ENCODE measurements at regions of chr15 and their contacts with region 1.

Region 1: DNA sequence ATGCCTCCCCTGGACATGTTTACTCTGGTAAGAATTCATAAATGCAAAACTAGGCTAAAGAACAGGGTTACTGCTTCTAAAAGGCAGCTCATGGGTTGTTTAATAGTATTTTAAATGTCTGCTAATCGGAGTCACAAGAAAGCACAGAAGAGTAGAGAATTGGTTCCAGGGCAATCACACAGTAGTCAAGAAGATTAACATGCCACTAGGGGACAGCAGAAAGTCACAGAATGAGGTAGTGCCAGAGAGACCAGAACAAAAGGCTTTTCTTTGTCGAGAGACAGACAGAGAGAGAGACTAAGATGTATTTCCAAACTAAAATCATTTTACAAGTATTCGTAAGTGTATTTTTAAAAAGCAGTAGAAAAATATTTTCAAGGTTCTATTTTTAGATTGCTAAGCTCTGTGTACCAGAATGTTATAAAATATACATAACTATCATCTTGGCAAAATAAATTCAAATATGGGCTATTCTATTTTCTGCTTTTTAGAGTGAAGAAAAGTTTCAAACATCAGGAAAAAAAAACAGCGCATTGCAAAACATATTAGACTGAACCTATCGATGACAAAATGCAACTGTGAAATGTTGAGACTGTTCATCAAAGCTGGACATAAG is 78.3 kb upstream of the CDIN1 start:
- DNase-seq: peak; percentile 34
- H3K4me3 Mint-ChIP-seq: no peak overlapping the region
- H3K27ac Mint-ChIP-seq: no peak overlapping the region
- H3K4me1 Mint-ChIP-seq: no peaks in the 10 kb centered on the region
- H3K27me3 Mint-ChIP-seq: peaks cover 9% of the 10 kb centered on the region

Region 2: DNA sequence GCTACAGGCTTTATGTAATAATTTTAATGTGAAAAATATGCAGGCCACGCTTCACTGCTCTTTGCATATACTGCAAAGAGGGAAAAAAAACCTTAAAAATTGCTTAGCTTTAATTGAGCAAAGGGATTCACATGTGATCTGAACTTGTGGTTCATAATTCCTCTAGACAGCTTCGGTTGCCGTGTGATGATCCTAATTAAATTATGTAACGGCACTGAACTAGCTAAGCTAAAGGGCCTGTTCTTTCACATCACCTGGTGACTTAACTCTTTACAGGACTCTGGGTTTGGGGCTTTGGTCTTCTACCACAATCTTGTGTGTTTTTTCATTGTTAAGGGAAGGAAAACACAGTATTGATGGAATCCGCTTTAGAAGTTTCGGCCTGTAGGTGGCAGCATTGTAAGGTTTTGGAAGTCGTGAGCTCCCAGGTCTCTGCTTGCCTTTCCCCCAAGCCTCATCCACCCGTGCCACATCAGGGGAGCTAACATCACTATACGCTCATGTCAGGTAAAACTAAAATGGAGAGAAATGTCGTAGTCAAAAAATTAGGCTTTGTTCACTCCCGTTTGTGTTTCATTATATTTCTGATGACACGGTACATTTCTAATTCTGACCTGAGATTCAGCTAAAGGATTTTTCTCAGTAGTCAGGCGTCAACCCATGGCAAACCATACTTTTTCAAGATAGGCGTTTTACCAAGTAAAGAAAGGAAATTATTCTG is 749.6 kb before region 1 on chr15:
- CTCF ChIA-PET with region 1: interaction called, 3 read pairs
- intact Hi-C with region 1: loop called (anchors 2 kb)
- DNase-seq: peak; percentile 73
- H3K4me3 Mint-ChIP-seq: no peak overlapping the region
- H3K27ac Mint-ChIP-seq: no peak overlapping the region
- H3K4me1 Mint-ChIP-seq: no peaks in the 10 kb centered on the region
- H3K27me3 Mint-ChIP-seq: peaks cover 9% of the 10 kb centered on the region

Region 3: DNA sequence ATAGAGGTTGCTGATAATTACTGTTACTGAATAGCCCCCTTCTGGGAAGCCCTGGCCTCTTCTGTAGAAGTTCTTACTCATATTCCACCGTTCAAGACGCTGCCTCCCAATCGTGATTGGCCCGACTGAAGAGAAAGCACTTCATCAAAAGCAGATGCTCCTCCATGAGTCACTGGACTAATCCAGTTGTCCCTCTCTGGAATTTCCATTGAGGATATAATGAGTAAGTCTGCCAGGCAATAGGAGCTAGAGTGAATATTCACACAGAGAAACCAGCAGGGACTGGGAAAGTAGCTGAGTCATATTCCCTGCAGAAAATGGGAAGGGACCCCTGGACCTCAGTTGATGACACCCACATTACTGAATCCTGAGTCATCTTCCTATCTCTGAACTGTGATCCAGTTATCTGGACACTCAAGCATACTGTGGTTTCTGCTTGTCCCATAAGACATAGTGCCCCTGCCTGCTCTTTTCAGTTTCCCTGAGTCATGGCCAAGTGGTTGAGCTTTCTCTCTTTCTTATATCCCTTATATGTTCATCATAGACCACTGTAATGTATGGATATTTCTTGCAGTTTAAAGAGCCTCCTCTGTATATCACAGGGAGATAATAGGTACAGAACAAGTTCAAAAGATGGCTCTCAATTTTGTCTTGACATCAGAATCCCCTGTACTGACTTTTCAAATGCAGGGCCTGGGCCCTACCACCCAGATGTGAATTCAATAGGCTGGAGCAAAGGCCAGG is 72.9 kb before region 1 on chr15:
- CTCF ChIA-PET with region 1: no interaction called
- intact Hi-C with region 1: no loop called
- DNase-seq: no peak
- H3K4me3 Mint-ChIP-seq: no peak overlapping the region
- H3K27ac Mint-ChIP-seq: no peak overlapping the region
- H3K4me1 Mint-ChIP-seq: no peaks in the 10 kb centered on the region
- H3K27me3 Mint-ChIP-seq: peaks cover 3% of the 10 kb centered on the region

Region 4: DNA sequence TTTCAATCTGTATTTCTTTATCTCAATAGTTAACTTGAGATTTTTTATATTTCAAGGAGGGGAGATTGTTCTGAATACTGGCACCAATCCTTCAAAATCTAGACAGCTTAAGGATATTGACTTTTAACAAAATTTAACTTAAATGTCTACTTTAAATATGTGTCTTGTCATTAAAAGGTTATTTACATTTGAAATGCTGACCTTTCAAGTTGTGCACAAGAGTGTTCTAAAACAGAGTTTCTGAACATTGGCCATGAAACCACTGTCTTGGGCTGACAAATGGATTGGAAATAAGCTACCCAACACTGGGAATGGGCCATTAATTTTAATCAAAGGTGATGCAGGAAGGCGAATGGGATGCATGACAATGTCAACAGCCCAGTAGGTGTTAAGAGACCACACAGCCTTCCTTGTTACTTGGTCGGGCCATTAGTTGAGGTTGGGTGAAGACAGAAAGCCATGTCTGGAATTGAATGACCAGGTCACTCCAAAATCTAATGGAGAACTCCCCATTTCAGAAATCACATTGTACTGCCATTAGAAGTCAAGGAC is 206.8 kb after region 1 on chr15:
- CTCF ChIA-PET with region 1: no interaction called
- intact Hi-C with region 1: no loop called
- DNase-seq: no peak
- H3K4me3 Mint-ChIP-seq: no peak overlapping the region
- H3K27ac Mint-ChIP-seq: no peak overlapping the region
- H3K4me1 Mint-ChIP-seq: no peaks in the 10 kb centered on the region
- H3K27me3 Mint-ChIP-seq: no peaks in the 10 kb centered on the region

Region 5: DNA sequence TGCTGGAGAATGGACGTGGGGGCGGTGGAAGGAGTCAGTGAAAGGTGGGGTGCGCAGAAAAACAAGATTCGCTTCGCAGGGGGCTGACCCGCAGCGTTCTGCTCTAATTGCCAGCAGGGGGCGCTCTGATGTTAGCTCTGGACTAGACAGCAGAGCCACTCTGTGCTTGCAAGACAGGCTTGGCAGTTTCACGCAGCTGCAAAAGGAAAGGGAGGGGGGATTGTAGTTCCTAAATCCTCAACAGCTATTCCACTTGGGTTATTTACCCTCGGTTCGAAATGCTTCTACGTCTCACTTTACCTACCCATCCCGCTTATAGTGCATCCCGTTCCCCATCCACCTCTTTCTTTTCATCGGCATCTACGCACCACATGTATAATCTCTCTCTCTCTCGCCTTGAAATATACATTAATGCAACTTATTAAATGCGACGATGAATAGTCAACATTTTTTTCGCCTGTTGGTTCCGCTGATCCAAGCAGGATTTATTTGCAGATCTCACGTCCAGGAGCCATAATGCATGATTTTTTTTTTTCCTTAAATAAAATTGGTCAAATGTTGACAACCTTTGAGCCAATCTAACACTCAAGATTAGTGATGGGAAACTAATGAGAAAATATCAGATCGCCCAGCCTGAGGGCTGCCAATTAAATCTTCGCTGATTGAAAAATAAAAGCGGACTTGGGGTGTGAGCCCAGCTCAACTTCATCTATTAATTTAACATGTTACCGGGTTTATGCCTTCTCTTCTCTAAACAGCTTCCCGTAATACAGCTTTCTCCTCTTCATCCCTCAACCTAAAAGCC is 382.7 kb after region 1 on chr15:
- CTCF ChIA-PET with region 1: no interaction called
- intact Hi-C with region 1: loop called (anchors 10 kb)
- DNase-seq: peak; percentile 84
- H3K4me3 Mint-ChIP-seq: no peak overlapping the region
- H3K27ac Mint-ChIP-seq: no peak overlapping the region
- H3K4me1 Mint-ChIP-seq: peaks cover 13% of the 10 kb centered on the region
- H3K27me3 Mint-ChIP-seq: peaks cover 90% of the 10 kb centered on the region

Region 6: DNA sequence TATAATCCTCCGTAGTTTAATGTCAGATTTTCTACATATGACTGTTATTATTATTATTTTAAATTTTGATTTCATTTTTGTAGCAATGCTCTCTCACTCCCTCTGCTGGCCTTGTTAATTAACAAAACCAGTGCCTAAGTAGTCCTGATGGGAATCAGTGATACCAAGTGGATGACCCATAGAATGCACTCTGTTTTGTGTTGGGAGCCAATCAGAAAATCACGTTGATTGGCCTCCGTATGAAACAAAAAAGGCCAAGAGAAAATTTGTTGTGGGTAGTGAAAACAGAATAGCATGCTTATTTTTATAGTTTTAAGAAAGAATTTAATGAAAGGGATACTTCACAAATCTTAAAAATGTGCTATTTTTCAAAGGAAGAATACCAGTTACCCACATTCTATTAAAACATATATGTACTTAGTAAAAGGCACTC is 633.5 kb after region 1 on chr15:
- CTCF ChIA-PET with region 1: interaction called, 3 read pairs
- intact Hi-C with region 1: loop called (anchors 10 kb)
- DNase-seq: no peak
- H3K4me3 Mint-ChIP-seq: no peak overlapping the region
- H3K27ac Mint-ChIP-seq: no peak overlapping the region
- H3K4me1 Mint-ChIP-seq: no peaks in the 10 kb centered on the region
- H3K27me3 Mint-ChIP-seq: peaks cover 26% of the 10 kb centered on the region

Measured in activated naive CD4-positive, alpha-beta T cell treated with anti-CD3 and anti-CD28 coated beads for 36 hours (primary cell).